PC-3 (cell line): ENCODE measurements at regions of chr14 and their contacts with region 1.

Region 1: GRCh38 chr14:54347997-54348611 is 48.7 kb upstream of the CDKN3 start:
- DNase-seq: peak; percentile 99
- ATAC-seq: peak; percentile 70
- H3K4me3 ChIP-seq: no peak overlapping the region
- H3K27ac ChIP-seq: no peak overlapping the region
- H3K4me1 ChIP-seq: peaks cover 19% of the 10 kb centered on the region
- H3K27me3 ChIP-seq: no peaks in the 10 kb centered on the region
- CTCF ChIP-seq: peak; percentile 99

Region 2: DNA sequence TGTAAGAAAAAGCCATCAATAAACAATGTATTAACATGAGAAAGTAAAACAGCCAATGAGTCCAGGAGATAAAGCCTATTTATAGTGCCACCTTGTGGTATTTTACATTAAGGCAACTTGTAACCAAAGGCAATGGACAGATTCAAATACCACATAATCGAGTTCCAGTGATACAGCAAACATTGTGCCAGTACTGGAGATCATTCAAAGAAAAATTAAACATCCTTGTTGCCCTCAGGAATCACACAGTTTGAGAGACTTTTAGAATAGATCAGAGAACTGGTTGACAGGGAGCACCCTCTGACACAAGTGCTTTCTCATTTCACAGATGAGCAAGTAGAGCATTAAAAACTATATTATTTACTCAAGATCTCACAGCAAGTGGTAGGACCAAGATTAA is 1293.1 kb before region 1 on chr14:
- CTCF ChIA-PET with region 1: no interaction called
- POLR2A ChIA-PET with region 1: no interaction called
- intact Hi-C with region 1: loop called (anchors 1 kb)
- DNase-seq: peak; percentile 78
- ATAC-seq: peak; percentile 95
- H3K4me3 ChIP-seq: no peak overlapping the region
- H3K27ac ChIP-seq: no peak overlapping the region
- H3K4me1 ChIP-seq: peaks cover 1% of the 10 kb centered on the region; the same call in 1 of the 2 replicates
- H3K27me3 ChIP-seq: no peaks in the 10 kb centered on the region
- CTCF ChIP-seq: peak; percentile 94

Region 3: GRCh38 chr14:53380052-53380866 is 967.8 kb before region 1 on chr14:
- CTCF ChIA-PET with region 1: no interaction called
- POLR2A ChIA-PET with region 1: interaction called, 29 read pairs
- intact Hi-C with region 1: no loop called
- DNase-seq: no peak
- ATAC-seq: 0 out of 2 replicates have a peak, but pooled peaks have one; percentile 13
- H3K4me3 ChIP-seq: no peak overlapping the region
- H3K27ac ChIP-seq: no peak overlapping the region
- H3K4me1 ChIP-seq: peaks cover 5% of the 10 kb centered on the region; the same call in 1 of the 2 replicates
- H3K27me3 ChIP-seq: no peaks in the 10 kb centered on the region
- CTCF ChIP-seq: no peak

Region 4: DNA sequence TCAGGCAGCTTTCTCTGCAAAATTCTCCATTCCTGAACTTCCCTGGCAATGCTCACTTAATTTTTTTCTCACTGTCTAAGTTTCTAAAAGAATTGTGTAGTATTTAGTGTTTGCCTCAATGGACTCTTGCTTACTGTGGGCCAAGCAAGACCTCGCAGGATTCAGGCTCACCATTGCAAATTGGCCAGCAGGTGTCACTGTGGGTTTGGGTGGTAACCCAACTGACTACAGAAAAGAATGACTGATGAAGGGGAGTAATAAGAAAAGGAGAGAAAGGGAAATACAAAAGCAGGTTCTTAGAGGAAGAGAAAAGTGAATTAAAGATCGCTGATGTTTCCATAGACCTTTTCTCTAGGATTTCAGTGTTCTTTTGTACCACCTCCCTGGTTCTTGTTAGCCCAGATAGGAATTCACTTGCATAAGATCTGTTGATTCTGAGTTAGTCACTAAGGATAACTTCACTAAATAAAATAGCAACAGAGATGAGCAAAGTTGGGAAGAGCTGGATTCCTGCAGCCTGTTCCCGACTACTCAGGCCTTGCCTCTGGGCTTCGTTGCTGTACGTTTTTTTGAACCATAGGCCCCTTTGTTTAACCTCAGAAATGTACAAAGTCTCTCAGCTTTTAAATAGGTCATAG is 808.5 kb before region 1 on chr14:
- CTCF ChIA-PET with region 1: interaction called, 6 read pairs
- POLR2A ChIA-PET with region 1: no interaction called
- intact Hi-C with region 1: loop called (anchors 1 kb)
- DNase-seq: peak; percentile 92
- ATAC-seq: peak; percentile 62
- H3K4me3 ChIP-seq: no peak overlapping the region
- H3K27ac ChIP-seq: peak overlapping the region; percentile 3; the same call in 1 of the 2 replicates
- H3K4me1 ChIP-seq: peaks cover 26% of the 10 kb centered on the region
- H3K27me3 ChIP-seq: no peaks in the 10 kb centered on the region
- CTCF ChIP-seq: peak; percentile 98

Region 5: GRCh38 chr14:53663709-53664108 is 684.4 kb before region 1 on chr14:
- CTCF ChIA-PET with region 1: interaction called, 13 read pairs
- POLR2A ChIA-PET with region 1: no interaction called
- intact Hi-C with region 1: loop called (anchors 5 kb)
- DNase-seq: peak; percentile 53
- ATAC-seq: peak; percentile 93
- H3K4me3 ChIP-seq: no peak overlapping the region
- H3K27ac ChIP-seq: no peak overlapping the region
- H3K4me1 ChIP-seq: no peaks in the 10 kb centered on the region
- H3K27me3 ChIP-seq: peaks cover 2% of the 10 kb centered on the region; the same call in 1 of the 2 replicates
- CTCF ChIP-seq: peak; percentile 70

Region 6: GRCh38 chr14:54175298-54175942 is 172.7 kb before region 1 on chr14:
- CTCF ChIA-PET with region 1: interaction called, 10 read pairs
- POLR2A ChIA-PET with region 1: interaction called, 6 read pairs
- intact Hi-C with region 1: no loop called
- DNase-seq: peak; percentile 100
- ATAC-seq: peak; percentile 61
- H3K4me3 ChIP-seq: no peak overlapping the region
- H3K27ac ChIP-seq: no peak overlapping the region
- H3K4me1 ChIP-seq: peaks cover 73% of the 10 kb centered on the region
- H3K27me3 ChIP-seq: no peaks in the 10 kb centered on the region
- CTCF ChIP-seq: peak; percentile 100

Region 7: DNA sequence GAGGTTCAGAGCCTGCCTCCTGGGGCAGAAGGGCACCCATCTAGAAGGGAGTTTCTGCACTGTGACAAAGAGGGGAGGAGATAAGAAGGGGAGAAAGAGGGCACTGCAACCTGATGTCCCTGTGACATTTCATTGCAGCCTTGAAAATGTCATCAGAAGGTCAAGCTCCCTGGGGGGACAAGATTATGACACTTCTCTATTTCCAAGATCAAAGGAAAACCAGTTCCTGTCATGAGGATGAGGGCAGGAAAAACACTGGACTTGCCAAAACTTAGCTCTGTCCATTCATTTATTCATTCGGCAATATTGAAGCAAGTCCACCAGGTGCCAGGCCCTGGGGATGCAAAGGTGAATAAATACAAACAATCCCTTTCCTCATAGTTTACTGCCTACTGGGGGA is 89.7 kb before region 1 on chr14:
- CTCF ChIA-PET with region 1: no interaction called
- POLR2A ChIA-PET with region 1: no interaction called
- intact Hi-C with region 1: no loop called
- DNase-seq: no peak
- ATAC-seq: no peak
- H3K4me3 ChIP-seq: no peak overlapping the region
- H3K27ac ChIP-seq: no peak overlapping the region
- H3K4me1 ChIP-seq: peaks cover 11% of the 10 kb centered on the region
- H3K27me3 ChIP-seq: no peaks in the 10 kb centered on the region
- CTCF ChIP-seq: no peak

Region 8: DNA sequence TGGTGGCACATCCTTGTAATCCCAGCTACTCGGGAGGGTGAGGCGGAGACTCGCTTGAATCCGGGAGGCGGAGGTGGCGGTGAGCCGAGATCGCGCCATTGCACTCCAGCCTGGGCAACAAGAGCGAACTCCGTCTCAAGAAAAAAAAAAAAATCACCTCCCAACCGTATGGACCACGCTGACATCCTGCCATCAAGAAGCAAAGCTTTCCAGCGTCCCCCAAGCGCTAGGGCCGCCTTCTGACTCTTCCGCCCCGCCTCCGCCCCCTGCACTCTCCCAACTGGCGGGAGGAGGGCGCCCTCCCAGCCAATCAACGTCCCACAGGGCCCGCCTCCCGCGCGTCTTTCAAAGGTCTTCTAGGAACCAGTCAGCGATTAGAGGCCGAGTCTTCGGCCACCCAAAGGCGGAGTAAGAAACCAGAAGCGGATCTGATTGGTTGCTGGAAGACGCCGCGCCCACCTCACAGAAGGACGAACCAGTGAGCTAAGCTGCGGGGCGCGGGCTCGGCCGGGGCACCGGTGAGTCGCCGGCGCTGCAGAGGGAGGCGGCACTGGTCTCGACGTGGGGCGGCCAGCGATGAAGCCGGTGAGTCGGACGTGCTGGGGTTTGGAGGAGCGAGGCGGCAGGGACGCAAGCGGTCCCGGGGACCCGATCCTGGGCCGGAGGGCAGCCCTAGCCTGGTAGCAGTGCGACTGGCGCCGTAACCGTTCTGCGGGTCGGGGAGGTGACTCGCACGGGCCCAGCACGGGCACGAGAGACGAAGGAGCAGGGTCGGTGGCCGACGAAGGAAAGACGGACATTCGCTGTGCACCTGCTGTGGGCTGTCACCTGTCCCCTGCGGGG is 48.6 kb after region 1 on chr14 and contains the start of gene CDKN3:
- CTCF ChIA-PET with region 1: interaction called, 10 read pairs
- POLR2A ChIA-PET with region 1: interaction called, 5 read pairs
- intact Hi-C with region 1: no loop called
- DNase-seq: peak; percentile 100
- ATAC-seq: peak; percentile 95
- H3K4me3 ChIP-seq: peak within 1 kb of the TSS; percentile 90
- H3K27ac ChIP-seq: peak within 1 kb of the TSS; percentile 39
- H3K4me1 ChIP-seq: peaks cover 24% of the 10 kb centered on the region
- H3K27me3 ChIP-seq: no peaks in the 10 kb centered on the region
- CTCF ChIP-seq: peak; percentile 54; the same call in 1 of the 2 replicates
- total RNA-seq, gene CDKN3: 354 and 434 TPM in 2 replicates